Endothelial cell of umbilical vein (primary cell): ENCODE measurements at regions of chr3 and their contacts with region 1.

Region 1: GRCh38 chr3:193902607-193903511 is 233.1 kb upstream of the HES1 start:
- DNase-seq: no peak
- H3K4me3 ChIP-seq: no peak overlapping the region
- H3K27ac ChIP-seq: no peak overlapping the region
- H3K4me1 ChIP-seq: no peaks in the 10 kb centered on the region
- H3K27me3 ChIP-seq: peaks cover 0 to 9% of the 10 kb centered on the region in 2 experiments
- CTCF ChIP-seq: no peak
- POLR2A ChIP-seq: no peak

Region 2: DNA sequence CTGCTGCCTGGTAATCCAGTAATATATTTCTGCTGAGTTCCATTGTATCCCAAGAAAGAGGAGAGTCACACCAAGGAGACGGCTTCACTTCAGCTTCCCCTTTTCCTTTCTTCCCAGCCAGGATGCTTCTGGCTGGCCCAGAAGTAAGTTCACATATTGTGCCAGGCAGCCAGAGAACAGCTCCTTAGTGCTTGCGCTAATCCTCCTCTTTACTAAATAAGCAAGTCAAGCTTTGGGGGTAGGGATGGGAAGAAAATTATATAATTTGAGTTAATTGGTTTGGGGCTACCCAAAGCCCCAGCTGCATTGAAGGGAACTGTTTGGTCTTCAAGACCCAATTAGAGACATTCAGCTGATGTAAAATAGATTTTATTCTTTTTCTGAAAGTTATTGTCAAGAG is 14.3 kb after region 1 on chr3:
- CTCF ChIA-PET with region 1: interaction called, 11 read pairs
- POLR2A ChIA-PET with region 1: no interaction called
- dilution Hi-C with region 1: no loop called
- intact Hi-C with region 1: no loop called
- DNase-seq: no peak
- H3K4me3 ChIP-seq: no peak overlapping the region
- H3K27ac ChIP-seq: no peak overlapping the region
- H3K4me1 ChIP-seq: no peaks in the 10 kb centered on the region
- H3K27me3 ChIP-seq: peaks cover 2 to 8% of the 10 kb centered on the region in 2 experiments
- CTCF ChIP-seq: no peak
- POLR2A ChIP-seq: no peak

Region 3: DNA sequence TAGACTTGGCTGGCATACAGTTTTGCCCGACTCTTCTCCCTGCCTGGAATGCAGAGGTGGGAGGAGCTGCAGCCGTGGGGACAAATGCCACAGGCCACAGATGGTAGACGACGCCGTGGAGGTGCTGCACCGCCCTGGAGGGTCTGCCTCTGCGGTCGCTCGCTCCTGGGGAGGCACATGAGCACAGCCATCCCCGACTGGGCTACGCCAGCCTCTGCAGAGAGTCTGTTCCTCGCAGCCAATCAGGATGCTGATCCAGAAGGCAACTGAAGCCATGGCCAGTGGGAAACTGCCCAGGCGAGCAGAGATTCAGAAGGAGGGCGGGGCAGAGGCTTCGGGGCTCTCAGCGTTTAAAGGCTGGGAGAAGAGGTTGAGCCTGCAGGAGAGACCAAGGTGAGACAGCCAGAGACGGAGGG is 478.6 kb after region 1 on chr3:
- CTCF ChIA-PET with region 1: no interaction called
- POLR2A ChIA-PET with region 1: no interaction called
- dilution Hi-C with region 1: no loop called
- intact Hi-C with region 1: no loop called
- DNase-seq: no peak
- H3K4me3 ChIP-seq: no peak overlapping the region
- H3K27ac ChIP-seq: no peak overlapping the region
- H3K4me1 ChIP-seq: peaks cover 4% of the 10 kb centered on the region
- H3K27me3 ChIP-seq: peaks cover 6 to 17% of the 10 kb centered on the region in 2 experiments
- CTCF ChIP-seq: no peak
- POLR2A ChIP-seq: no peak